Activated T-helper 1 cell treated with anti-CD3 and anti-CD28 coated beads, Interleukin-12 subunit alpha, Interleukin-12 subunit beta, Interleukin-2, Interleukin-4 antibody, amounts not matched to agents 30 ng/mL and 10 ng/mL and 1 ng/mL, durations not matched to agents 14 hours and 24 hours and 36 hours (primary cell): ENCODE measurements at regions of chr12 and their contacts with region 1.

Region 1: GRCh38 chr12:10771132-10771733 is 31.2 kb downstream of the TAS2R7 start:
- DNase-seq: no peak
- H3K4me3 Mint-ChIP-seq: no peak overlapping the region
- H3K27ac Mint-ChIP-seq: no peak overlapping the region
- H3K4me1 Mint-ChIP-seq: no peaks in the 10 kb centered on the region
- H3K27me3 Mint-ChIP-seq: peaks cover 59% of the 10 kb centered on the region

Region 2: DNA sequence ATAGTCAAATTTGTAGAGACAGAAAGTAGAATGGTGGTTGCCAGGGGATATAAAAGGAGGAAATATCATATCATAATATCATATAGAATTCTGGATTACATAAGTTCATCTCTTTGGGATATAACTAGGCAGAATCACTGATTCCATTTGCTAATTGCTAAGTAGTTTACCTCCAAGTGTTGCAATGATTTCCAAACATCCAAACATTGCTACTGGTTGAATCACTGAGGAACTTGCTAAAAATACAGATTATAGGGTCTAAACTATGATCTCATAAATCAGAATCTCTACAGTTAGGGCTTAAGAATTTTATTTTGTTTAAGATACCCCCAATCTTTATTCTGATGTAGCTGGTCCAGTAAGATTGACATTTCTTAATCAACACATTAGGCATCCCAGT is 431.6 kb after region 1 on chr12:
- intact Hi-C with region 1: loop called (anchors 1 kb)
- DNase-seq: no peak
- H3K4me3 Mint-ChIP-seq: no peak overlapping the region
- H3K27ac Mint-ChIP-seq: no peak overlapping the region
- H3K4me1 Mint-ChIP-seq: no peaks in the 10 kb centered on the region
- H3K27me3 Mint-ChIP-seq: peaks cover 6% of the 10 kb centered on the region